ENCODE measurements at regions of chr14 and their contacts with region 1.

Region 1: GRCh38 chr14:58501214-58501816 is 73.8 kb downstream of the KIAA0586 start:
- DNase-seq: no peak
- H3K4me3 Mint-ChIP-seq: no peak overlapping the region
- H3K27ac Mint-ChIP-seq: no peak overlapping the region
- H3K4me1 Mint-ChIP-seq: no peaks in the 10 kb centered on the region
- H3K27me3 Mint-ChIP-seq: no peaks in the 10 kb centered on the region

Region 2: DNA sequence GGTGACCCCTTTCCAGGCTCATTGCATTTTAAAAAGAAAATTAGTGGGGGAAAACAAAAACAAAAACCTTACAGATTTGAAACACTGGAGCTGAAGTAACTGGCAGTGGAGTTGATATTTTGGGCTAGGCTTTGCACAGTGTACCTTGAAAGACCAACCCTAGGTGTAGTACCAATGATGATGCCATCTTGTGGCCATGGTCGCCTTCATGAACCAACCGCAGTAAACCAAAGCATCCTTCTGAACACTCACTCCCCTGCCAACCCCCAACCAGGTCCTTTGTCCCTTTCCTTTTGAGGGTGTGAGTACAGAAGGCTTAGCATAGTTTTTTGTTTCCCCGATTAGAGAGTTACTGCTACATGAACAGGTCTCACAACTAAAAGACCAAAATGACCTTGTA is 99.7 kb before region 1 on chr14:
- CTCF ChIA-PET with region 1: no interaction called
- POLR2A ChIA-PET with region 1: no interaction called
- intact Hi-C with region 1: no loop called
- DNase-seq: no peak
- H3K4me3 Mint-ChIP-seq: no peak overlapping the region
- H3K27ac Mint-ChIP-seq: no peak overlapping the region
- H3K4me1 Mint-ChIP-seq: peaks cover under 1% of the 10 kb centered on the region
- H3K27me3 Mint-ChIP-seq: no peaks in the 10 kb centered on the region

Region 3: DNA sequence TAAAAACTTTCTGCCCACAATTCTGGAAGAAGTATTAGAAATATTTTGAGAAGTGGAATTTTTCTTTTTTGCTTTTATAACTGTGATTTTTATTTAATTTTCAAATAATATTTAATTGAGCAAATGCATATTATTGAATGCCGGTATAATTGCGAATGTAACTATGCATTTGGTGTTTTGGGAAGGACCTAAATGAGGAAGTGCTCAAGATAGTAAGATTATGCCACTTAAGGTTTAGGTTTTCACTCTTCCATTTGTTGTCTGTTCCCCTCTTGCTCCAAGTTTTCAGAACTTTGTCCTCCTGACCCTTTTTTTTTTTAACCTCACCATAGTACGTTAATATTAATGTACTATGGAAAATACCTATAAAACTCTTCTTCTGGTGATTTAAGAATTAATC is 12.0 kb after region 1 on chr14:
- CTCF ChIA-PET with region 1: interaction called, 22 read pairs
- POLR2A ChIA-PET with region 1: no interaction called
- intact Hi-C with region 1: no loop called
- DNase-seq: no peak
- H3K4me3 Mint-ChIP-seq: no peak overlapping the region
- H3K27ac Mint-ChIP-seq: no peak overlapping the region
- H3K4me1 Mint-ChIP-seq: no peaks in the 10 kb centered on the region
- H3K27me3 Mint-ChIP-seq: no peaks in the 10 kb centered on the region

Region 4: DNA sequence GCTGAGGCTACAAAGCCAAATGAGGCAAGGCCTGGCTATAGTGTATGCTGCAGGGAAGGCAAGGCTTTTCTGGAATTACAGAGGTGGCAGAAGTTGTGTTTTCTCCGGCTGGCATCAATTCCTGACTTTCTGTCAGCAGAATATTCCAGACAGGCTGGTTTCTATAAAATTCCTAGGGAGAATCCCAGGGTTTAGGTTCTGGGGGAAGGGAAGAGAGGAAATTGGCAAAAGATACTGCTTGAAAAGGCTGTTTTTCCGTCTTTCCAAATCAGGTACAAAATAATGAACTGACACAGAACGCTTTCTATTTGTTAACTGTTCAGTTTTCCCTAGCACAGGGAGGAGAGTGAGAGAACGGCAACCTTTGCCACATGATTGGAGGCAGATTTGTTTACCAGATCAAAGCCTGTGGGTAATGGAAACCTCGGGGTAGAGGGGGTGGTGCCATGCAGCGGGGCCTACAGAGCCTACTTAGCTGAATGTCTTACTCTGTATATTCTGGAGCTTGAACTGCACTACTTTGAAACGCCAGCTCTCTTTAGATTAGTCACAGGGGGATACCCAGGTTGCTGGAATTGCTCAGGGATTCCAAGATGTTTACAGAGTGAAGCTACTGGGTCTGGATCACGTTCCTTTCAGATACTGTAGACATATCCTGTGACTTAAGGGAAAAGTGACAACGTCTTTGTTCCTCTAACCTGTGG is 70.6 kb after region 1 on chr14:
- CTCF ChIA-PET with region 1: interaction called, 11 read pairs
- POLR2A ChIA-PET with region 1: no interaction called
- intact Hi-C with region 1: loop called (anchors 1 kb)
- DNase-seq: peak; percentile 77
- H3K4me3 Mint-ChIP-seq: peak overlapping the region; percentile 11
- H3K27ac Mint-ChIP-seq: peak overlapping the region; percentile 87
- H3K4me1 Mint-ChIP-seq: peaks cover 39% of the 10 kb centered on the region
- H3K27me3 Mint-ChIP-seq: no peaks in the 10 kb centered on the region

Region 5: GRCh38 chr14:58826845-58827686 is 325.8 kb after region 1 on chr14:
- CTCF ChIA-PET with region 1: interaction called, 13 read pairs
- POLR2A ChIA-PET with region 1: no interaction called
- intact Hi-C with region 1: loop called (anchors 5 kb)
- DNase-seq: no peak
- H3K4me3 Mint-ChIP-seq: no peak overlapping the region
- H3K27ac Mint-ChIP-seq: no peak overlapping the region
- H3K4me1 Mint-ChIP-seq: no peaks in the 10 kb centered on the region
- H3K27me3 Mint-ChIP-seq: peaks cover 1% of the 10 kb centered on the region

Region 6: DNA sequence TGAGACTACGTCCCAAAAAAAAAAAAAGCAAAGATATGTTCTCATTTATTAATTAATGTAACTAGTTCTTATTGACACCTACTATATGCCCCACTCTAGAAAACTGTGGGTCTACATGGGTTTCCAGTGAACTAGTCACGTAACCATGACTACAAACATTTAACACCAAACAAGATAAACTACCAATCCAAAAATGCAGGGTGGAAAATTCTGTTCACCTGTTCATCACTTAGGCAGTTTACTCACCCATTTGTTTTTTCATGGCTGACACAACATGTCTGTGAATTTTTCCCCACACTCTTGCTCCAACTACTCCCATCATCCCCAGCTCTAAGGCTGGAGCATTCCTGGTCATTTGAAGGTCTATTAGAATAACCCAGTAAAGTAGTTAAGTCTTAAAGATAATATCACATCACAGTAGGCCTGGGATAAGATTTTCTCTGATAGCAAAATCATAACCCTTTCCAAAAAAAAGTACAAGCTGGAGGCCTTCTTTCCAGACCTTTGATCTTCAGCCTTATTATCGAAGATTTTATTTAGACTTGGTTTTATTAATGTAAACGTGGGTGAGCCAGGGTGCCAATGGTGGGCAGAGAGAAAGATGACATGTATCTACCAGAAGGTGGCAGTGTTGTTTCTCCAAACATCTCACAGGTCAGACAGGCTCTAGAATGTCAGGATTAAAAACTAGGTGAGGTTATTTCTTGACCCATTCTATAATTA is 625.6 kb after region 1 on chr14:
- CTCF ChIA-PET with region 1: interaction called, 4 read pairs
- POLR2A ChIA-PET with region 1: no interaction called
- intact Hi-C with region 1: loop called (anchors 2 kb)
- DNase-seq: peak; percentile 15
- H3K4me3 Mint-ChIP-seq: no peak overlapping the region
- H3K27ac Mint-ChIP-seq: no peak overlapping the region
- H3K4me1 Mint-ChIP-seq: no peaks in the 10 kb centered on the region
- H3K27me3 Mint-ChIP-seq: peaks cover 16% of the 10 kb centered on the region